ENCODE measurements at regions of chr10 and their contacts with region 1.

Region 1: DNA sequence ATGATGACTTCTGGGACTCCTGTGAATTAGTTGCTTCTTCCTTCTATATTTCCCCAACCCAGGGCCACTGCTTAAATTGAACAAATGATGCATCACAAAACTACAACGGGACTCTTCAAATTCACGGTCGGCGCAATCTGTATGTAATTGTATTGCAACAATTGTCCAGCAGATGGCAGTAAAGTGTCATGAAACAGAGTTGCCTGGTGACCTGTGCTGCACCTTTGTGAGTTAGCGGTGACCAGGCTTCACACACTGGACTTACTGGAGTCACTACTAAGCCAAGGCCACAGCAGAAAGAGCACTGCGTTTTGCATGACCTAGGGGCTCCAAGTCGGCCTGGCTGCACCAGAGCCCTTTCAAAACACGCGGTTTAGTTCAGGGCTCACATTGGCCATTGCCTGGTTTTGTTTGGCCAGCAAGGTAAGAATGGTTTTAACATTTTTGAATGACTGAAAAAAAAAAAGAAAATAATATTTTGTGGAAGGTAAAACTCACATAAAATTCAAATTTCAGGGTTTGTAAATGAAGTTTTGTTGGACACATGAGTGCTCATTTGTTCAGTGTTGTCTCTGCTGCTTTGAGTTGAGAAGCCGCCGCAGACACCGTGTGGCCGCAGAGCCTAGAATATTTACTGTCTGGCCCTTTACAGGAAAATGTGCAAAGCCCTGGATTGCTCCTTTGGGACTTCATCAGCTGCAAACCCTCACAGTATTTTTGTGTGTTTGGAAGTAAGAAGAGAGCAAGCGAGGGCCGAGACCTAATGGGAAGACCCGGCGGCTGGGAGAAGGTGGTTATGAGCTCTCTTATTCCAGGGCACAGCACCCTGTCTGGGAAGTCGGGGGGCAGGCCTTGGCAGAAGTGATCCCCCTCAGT is 23.2 kb upstream of the ZNF32 start:
- H3K4me3 Mint-ChIP-seq: no peak overlapping the region
- H3K27ac Mint-ChIP-seq: no peak overlapping the region
- H3K4me1 Mint-ChIP-seq: peaks cover 3% of the 10 kb centered on the region
- H3K27me3 Mint-ChIP-seq: peaks cover 39% of the 10 kb centered on the region

Region 2: GRCh38 chr10:43594944-43595589 is 76.8 kb before region 1 on chr10:
- intact Hi-C with region 1: no loop called
- H3K4me3 Mint-ChIP-seq: peak overlapping the region; percentile 66
- H3K27ac Mint-ChIP-seq: peak overlapping the region; percentile 83
- H3K4me1 Mint-ChIP-seq: peaks cover 34% of the 10 kb centered on the region
- H3K27me3 Mint-ChIP-seq: peaks cover 2% of the 10 kb centered on the region

Region 3: DNA sequence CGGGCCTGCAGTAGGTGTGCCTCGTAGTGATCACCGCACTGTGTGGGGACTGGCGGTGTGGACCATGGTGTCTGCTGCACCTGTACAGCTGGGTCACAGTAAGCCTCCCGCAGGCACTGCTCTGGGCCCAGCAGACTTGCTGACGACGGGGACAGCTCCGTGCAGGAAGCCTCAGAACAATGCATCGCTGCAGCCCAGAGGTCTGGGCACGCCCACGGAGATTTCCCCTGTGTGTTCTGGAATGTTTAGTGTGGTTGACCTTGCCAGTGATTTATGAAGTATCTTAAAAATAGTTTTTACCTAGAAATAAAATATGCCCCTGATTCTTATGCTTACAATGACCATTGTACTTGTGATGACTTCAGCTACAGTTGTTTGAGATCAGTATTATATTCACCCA is 35.9 kb after region 1 on chr10:
- intact Hi-C with region 1: no loop called
- H3K4me3 Mint-ChIP-seq: no peak overlapping the region
- H3K27ac Mint-ChIP-seq: no peak overlapping the region
- H3K4me1 Mint-ChIP-seq: no peaks in the 10 kb centered on the region
- H3K27me3 Mint-ChIP-seq: no peaks in the 10 kb centered on the region

Region 4: GRCh38 chr10:43739161-43739560 is 67.3 kb after region 1 on chr10:
- intact Hi-C with region 1: no loop called
- H3K4me3 Mint-ChIP-seq: no peak overlapping the region
- H3K27ac Mint-ChIP-seq: no peak overlapping the region
- H3K4me1 Mint-ChIP-seq: no peaks in the 10 kb centered on the region
- H3K27me3 Mint-ChIP-seq: peaks cover 2% of the 10 kb centered on the region

Region 5: DNA sequence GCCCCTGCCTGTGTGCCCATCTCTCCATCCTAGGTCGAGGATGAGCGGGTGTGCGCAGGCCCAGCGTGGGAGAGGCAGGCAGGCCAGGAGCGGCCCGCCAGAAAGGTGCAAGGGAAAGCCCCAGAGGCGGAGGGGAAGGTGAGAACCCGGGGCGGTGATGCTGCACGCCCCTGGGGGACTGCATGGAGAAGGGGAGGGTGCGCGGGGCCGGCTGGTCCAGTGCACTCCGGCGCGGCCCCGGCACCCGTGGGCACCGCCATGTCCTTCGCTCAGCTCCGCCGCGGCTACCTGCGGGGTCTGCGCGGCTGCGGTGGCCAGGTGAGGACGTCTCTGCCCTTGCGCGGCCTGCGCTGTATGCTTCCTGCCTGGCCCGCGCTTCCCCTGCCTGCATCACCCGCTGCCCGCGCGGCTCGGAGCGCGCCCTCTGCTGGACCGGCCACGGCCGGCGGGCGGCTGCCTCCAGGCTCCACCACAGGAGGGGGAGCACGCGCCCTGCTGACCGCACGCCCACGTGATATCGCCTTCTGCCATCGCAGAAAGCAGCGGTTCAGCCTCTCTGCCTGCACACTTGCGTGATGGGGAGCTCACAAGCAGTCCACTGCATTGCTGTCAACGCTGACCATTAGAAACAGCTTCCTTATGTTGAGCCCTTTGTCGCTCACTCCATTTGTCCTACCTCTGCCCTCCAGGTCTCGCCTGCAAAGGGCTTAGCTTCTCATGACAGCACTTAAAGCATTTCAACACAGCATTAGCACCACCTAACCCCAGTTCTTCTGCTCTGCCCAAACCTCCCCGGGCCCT is 639.1 kb after region 1 on chr10:
- intact Hi-C with region 1: loop called (anchors 1 kb)
- H3K4me3 Mint-ChIP-seq: no peak overlapping the region
- H3K27ac Mint-ChIP-seq: no peak overlapping the region
- H3K4me1 Mint-ChIP-seq: peaks cover 7% of the 10 kb centered on the region
- H3K27me3 Mint-ChIP-seq: peaks cover 16% of the 10 kb centered on the region

Region 6: DNA sequence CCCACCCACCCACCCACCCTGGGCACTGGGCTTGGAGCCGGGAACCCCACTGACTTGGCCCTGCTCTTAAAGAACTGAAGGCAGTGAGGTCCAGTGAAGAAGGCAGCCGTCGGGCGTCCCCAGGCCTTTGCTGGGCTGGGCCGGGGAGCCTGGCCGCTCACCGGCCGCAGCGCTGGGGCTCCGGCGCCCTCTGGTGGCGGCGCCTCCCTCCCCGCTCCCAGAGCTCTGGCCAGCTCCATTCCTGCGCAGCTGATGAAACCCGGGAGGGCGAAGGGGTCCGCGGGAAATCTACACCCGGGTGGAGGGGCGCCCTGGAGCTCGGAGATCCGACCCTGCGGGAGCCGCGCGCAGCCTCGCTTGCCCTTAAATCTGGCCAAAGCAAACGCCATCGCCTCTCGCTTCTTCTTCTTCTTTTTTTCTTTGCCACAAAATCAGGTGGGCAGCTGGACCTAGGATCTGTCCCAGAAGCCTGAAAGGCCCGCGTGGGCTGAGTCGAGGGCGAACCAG is 714.7 kb after region 1 on chr10:
- intact Hi-C with region 1: loop called (anchors 5 kb)
- H3K4me3 Mint-ChIP-seq: no peak overlapping the region
- H3K27ac Mint-ChIP-seq: no peak overlapping the region
- H3K4me1 Mint-ChIP-seq: no peaks in the 10 kb centered on the region
- H3K27me3 Mint-ChIP-seq: peaks cover 60% of the 10 kb centered on the region

Region 7: GRCh38 chr10:44864637-44865288 is 1192.9 kb after region 1 on chr10:
- intact Hi-C with region 1: loop called (anchors 2 kb)
- H3K4me3 Mint-ChIP-seq: peak overlapping the region; percentile 89
- H3K27ac Mint-ChIP-seq: peak overlapping the region; percentile 57
- H3K4me1 Mint-ChIP-seq: peaks cover 19% of the 10 kb centered on the region
- H3K27me3 Mint-ChIP-seq: peaks cover 58% of the 10 kb centered on the region